AG04449 (cell line): ENCODE measurements at regions of chr17 and their contacts with region 1.

Region 1: GRCh38 chr17:40191237-40192208 is 14.3 kb downstream of the RAPGEFL1 start:
- DNase-seq: no peak
- H3K4me3 ChIP-seq: peak overlapping the region; percentile 66
- CTCF ChIP-seq: peak; percentile 89

Region 2: GRCh38 chr17:40021451-40021971 is 170.0 kb before region 1 on chr17:
- CTCF ChIA-PET with region 1: interaction called, 82 read pairs
- POLR2A ChIA-PET with region 1: no interaction called
- DNase-seq: no peak
- H3K4me3 ChIP-seq: no peak overlapping the region
- CTCF ChIP-seq: no peak

Region 3: GRCh38 chr17:40151414-40151963 is 40.0 kb before region 1 on chr17:
- CTCF ChIA-PET with region 1: no interaction called
- POLR2A ChIA-PET with region 1: no interaction called
- DNase-seq: no peak
- H3K4me3 ChIP-seq: no peak overlapping the region
- CTCF ChIP-seq: no peak

Region 4: GRCh38 chr17:40177275-40177874 is 14.1 kb before region 1 on chr17 and contains the start of gene RAPGEFL1:
- CTCF ChIA-PET with region 1: interaction called, 76 read pairs
- POLR2A ChIA-PET with region 1: interaction called, 3 read pairs
- DNase-seq: no peak
- H3K4me3 ChIP-seq: peak within 1 kb of the TSS; percentile 55
- CTCF ChIP-seq: no peak

Region 5: DNA sequence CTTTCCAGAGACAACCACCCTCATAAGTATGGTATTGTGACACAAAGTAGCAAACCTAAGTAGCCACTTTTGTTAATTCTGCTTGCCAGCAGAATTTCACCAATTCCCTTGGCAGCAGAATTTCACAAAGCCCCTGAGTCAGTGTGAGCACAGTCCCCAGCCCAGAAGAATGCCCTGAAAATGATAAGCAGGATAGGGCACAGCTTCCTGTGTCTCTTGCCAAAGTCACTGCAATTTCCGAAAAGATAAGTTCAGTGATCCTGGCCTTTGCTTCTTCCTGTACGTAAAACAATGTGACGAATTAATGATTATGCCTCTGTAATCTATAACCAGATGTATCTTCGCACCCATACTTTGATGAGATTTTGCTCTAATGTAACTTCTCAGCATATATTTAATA is 11.6 kb after region 1 on chr17:
- CTCF ChIA-PET with region 1: interaction called, 99 read pairs
- POLR2A ChIA-PET with region 1: interaction called, 4 read pairs
- DNase-seq: no peak
- H3K4me3 ChIP-seq: no peak overlapping the region
- CTCF ChIP-seq: no peak

Region 6: DNA sequence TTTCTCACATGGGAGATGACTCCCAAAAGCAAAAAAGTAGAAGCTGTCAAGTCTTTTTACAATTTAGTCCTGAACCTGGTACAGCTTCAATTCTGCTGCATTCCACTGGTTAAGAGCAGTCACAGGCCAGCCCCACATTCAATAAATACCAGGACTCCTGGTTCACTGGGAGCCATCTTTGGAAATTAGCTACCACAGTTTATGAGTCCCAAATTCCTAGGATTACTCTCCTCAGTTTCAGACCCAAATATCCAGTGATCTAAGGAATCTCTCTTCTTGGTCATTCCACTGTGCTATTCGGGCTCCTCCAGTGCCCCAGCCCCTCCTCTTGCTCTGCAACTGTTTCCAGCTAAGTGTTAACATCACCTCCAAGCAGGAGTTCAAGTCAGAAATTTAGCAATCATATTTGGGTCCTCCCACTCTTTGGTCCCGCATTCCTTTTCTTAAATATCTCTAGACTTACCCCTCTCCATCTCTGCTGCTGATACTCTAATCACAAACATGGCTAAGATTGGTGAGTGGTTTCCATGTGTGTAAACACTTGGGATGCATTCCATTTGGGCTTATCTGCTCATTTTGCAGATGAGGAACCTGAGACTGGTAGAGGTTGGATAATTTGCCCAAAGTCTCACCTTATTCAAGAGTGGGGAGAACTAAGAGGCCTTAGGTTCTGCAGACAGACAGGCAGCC is 18.0 kb after region 1 on chr17:
- CTCF ChIA-PET with region 1: interaction called, 35 read pairs
- POLR2A ChIA-PET with region 1: no interaction called
- DNase-seq: peak; percentile 69
- H3K4me3 ChIP-seq: no peak overlapping the region
- CTCF ChIP-seq: no peak